SK-N-SH (cell line): ENCODE measurements at regions of chr5 and their contacts with region 1.

Region 1: DNA sequence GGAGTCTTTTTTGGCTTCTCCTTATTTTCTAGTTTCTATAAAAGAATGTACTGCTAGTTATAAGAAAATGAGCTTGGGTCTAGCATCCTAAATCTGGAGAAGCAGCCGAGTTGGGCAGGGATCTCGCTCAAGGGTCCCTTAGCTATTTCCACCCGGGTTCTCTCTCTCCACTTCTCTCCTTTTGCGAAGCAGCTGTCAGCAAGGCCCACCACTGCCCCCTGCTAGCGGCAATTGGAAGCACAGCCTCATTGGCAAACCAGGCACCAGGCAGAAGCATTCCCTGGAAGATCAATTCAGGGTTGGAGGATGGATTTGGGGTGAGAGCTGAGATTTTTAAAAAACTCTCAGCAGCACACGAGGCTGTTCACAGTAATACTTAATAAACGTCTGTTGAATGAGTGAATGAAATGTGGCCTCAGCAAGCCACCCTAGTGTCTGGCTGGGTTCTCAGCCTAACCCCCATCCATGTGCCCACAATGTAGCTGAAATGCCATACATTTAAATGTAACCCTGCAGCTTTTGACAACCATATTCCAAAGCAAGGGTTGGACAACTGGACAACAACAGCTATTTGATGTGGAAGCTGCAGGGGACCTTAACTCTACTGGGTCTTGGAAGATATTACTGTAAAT is 34.6 kb upstream of the TNIP1 start:
- DNase-seq: peak; percentile 83
- H3K4me3 ChIP-seq: no peak overlapping the region
- H3K27ac ChIP-seq: no peak overlapping the region
- H3K4me1 ChIP-seq: no peaks in the 10 kb centered on the region
- H3K27me3 ChIP-seq: no peaks in the 10 kb centered on the region
- CTCF ChIP-seq: peak; percentile 97
- EP300 ChIP-seq: no peak
- RAD21 ChIP-seq: peak; percentile 92

Region 2: DNA sequence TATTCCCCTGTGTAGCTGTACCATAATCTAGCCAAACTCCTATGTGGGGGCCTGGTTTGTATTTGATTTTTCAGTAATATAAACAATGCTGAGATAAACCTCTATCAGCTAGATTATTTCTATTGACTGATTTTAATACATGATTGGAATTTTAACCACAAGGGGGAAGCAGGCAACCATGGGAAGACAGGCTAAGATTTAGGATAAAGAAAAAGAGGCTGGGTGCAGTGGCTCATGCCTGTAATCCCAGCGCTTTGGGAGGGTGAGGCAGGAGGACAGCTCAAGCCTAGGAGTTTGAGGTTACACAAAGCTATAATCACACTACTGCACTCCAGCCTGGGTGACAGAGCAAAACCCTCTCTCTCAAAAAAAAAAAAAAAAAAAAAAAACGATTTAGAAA is 113.1 kb before region 1 on chr5:
- CTCF ChIA-PET with region 1: interaction called, 57 read pairs
- POLR2A ChIA-PET with region 1: no interaction called
- DNase-seq: peak; percentile 41
- H3K4me3 ChIP-seq: no peak overlapping the region
- H3K27ac ChIP-seq: no peak overlapping the region
- H3K4me1 ChIP-seq: no peaks in the 10 kb centered on the region; a peak in 1 of 4 replicates
- H3K27me3 ChIP-seq: no peaks in the 10 kb centered on the region
- CTCF ChIP-seq: peak; percentile 60
- EP300 ChIP-seq: no peak
- RAD21 ChIP-seq: peak; percentile 76

Region 3: DNA sequence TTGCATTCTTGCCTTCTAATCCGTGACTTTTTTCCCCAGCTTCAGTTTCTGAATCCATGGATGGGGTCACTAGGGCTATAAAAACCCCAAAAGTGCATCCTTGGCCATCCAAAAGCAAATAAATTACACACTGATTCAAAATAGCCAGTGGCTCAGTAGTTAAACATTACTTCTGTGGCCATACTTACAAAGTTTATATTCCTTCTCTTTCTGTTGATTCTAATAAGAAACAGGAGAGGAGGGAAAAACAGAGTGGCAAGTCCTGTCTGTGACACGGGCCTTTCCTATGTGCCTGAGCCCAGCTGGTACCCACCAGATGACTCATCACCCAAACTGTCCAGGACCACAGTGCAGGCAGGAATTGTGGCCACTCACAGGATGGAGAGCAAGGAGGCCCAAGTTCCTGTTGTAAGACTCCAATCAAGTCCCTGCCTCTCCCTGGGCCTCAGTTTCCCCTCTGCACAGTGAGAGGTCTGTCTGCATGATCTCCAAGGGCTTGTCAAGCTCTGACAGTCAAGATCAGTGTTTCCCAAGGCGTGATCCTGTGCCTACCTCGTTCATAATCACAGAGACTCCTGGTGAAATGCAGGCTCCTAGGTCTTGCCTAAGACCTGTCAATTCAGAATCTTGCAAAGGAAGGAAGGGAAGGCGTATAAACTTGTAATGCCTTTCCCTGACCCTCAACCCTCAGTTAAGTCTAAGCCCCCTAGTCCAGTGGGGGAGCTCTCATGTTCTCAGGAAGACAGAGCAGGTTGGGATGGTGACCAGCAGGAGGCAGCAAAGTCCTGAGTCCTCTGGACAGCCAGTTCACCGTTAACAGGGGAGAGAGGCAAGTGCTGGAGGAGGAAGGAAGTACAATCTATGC is 64.1 kb before region 1 on chr5:
- CTCF ChIA-PET with region 1: interaction called, 441 read pairs
- POLR2A ChIA-PET with region 1: interaction called, 6 read pairs
- DNase-seq: peak; percentile 86
- H3K4me3 ChIP-seq: no peak overlapping the region; a peak in 1 of 4 replicates
- H3K27ac ChIP-seq: no peak overlapping the region
- H3K4me1 ChIP-seq: no peaks in the 10 kb centered on the region
- H3K27me3 ChIP-seq: no peaks in the 10 kb centered on the region
- CTCF ChIP-seq: peak; percentile 92
- EP300 ChIP-seq: no peak
- RAD21 ChIP-seq: peak; percentile 93

Region 4: DNA sequence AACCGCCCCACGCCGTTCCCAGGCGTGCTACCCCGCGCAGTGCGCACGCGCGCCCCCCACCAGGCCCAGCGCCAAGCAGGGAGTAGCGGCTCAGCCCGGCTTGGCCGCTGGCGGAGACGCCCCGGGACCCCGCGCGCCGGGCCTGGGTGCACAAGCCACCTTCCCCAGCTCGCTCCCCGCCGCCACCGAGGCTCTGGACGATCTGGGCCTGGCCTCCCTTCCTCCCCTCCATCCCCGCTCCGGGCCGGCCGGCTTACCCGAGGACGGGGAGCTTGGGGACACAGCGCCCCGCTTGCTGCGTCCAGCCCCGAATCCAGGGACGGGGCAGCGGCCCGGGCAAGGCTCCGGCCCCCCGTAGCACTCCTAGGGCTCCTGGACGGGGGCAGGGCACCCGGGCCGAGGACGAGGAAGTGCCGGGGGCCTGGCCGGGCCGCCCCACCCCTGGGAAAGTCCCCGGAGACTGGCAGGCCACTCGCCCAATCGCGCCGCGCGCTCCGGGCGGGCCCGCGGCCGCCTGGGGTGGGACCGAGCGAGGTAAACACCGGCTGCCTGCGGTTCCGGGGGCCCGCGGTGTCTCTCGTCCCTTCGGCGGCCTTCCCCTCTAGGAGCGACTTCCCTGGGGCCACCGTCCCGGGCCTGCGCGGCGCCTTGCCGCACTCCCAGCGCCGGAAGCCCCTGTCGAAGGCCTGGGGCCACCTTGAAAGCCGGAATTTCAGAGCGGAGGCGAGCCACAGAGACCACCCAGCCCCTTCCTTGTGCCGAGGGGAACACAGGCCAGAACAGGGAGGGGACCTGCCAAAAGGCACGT is 34.6 kb before region 1 on chr5 and contains the start of gene TNIP1:
- CTCF ChIA-PET with region 1: interaction called, 23 read pairs
- POLR2A ChIA-PET with region 1: interaction called, 3 read pairs
- DNase-seq: peak; percentile 98
- H3K4me3 ChIP-seq: peak within 1 kb of the TSS; percentile 80 to 85
- H3K27ac ChIP-seq: peak within 1 kb of the TSS; percentile 89 to 97
- H3K4me1 ChIP-seq: peaks cover 4 to 19% of the 10 kb centered on the region in 2 experiments; a peak in 3 of 4 replicates
- H3K27me3 ChIP-seq: no peaks in the 10 kb centered on the region
- CTCF ChIP-seq: no peak
- EP300 ChIP-seq: no peak
- RAD21 ChIP-seq: no peak
- polyA plus RNA-seq, gene TNIP1: 39.4 and 46.2 TPM in 2 replicates

Region 5: DNA sequence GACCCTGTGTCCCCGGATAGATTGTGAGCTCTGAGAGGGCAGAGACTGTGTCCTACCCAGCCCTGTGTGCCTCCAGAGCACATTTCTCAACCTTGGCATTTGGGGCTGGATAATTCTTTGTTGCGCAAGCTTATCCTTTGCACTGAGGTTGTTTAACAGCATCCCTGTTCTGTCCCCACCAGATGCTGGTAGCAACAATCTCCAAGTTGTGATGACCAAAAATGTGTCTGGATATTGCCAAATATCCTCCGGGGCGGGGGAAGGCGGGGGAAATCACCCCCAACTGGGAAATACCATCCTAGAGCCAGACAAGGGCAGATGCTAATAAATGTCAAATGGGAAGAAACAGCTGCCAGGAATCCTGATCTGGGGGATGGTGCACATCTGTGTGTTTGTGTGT is 10.6 kb before region 1 on chr5:
- CTCF ChIA-PET with region 1: interaction called, 30 read pairs
- POLR2A ChIA-PET with region 1: no interaction called
- DNase-seq: no peak
- H3K4me3 ChIP-seq: no peak overlapping the region
- H3K27ac ChIP-seq: no peak overlapping the region
- H3K4me1 ChIP-seq: peaks cover 0 to 3% of the 10 kb centered on the region in 2 experiments; a peak in 1 of 4 replicates
- H3K27me3 ChIP-seq: no peaks in the 10 kb centered on the region
- CTCF ChIP-seq: no peak
- EP300 ChIP-seq: no peak
- RAD21 ChIP-seq: no peak

Region 6: DNA sequence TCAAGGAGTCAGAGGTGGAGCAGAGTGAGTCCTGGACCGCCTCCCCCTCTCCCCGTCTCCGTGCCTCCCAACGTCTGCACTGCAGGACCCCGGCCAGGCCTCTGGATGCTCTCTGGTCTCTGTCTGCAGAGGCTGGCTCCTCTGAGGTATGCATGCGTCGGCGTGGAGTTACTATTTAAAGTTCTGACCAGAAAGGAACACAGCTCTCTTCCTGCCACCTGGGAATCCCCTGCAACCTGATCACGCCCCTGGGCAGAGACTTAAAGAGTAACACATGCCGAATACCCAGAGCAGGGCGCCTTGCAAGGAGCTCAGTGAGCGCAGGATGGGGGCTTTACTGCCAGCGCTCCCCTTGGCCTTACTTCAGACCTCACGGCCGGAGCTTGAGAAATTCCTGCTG is 26.1 kb after region 1 on chr5:
- CTCF ChIA-PET with region 1: interaction called, 29 read pairs
- POLR2A ChIA-PET with region 1: no interaction called
- DNase-seq: no peak
- H3K4me3 ChIP-seq: no peak overlapping the region
- H3K27ac ChIP-seq: no peak overlapping the region; a peak in 1 of 4 replicates
- H3K4me1 ChIP-seq: no peaks in the 10 kb centered on the region
- H3K27me3 ChIP-seq: no peaks in the 10 kb centered on the region
- CTCF ChIP-seq: no peak
- EP300 ChIP-seq: no peak
- RAD21 ChIP-seq: no peak

Region 7: GRCh38 chr5:151174612-151175101 is 59.3 kb after region 1 on chr5:
- CTCF ChIA-PET with region 1: interaction called, 540 read pairs
- POLR2A ChIA-PET with region 1: no interaction called
- DNase-seq: no peak
- H3K4me3 ChIP-seq: no peak overlapping the region
- H3K27ac ChIP-seq: no peak overlapping the region
- H3K4me1 ChIP-seq: no peaks in the 10 kb centered on the region
- H3K27me3 ChIP-seq: no peaks in the 10 kb centered on the region; the same call in 1 of the 2 replicates
- CTCF ChIP-seq: no peak
- EP300 ChIP-seq: no peak
- RAD21 ChIP-seq: no peak

Region 8: GRCh38 chr5:151483176-151483575 is 367.8 kb after region 1 on chr5:
- CTCF ChIA-PET with region 1: no interaction called
- POLR2A ChIA-PET with region 1: no interaction called
- DNase-seq: no peak
- H3K4me3 ChIP-seq: no peak overlapping the region
- H3K27ac ChIP-seq: peak overlapping the region in 1 of 2 experiments; percentile 20; a peak in 1 of 4 replicates
- H3K4me1 ChIP-seq: peaks cover 13% of the 10 kb centered on the region in 2 experiments; a peak in 3 of 4 replicates
- H3K27me3 ChIP-seq: no peaks in the 10 kb centered on the region
- CTCF ChIP-seq: no peak
- EP300 ChIP-seq: no peak
- RAD21 ChIP-seq: no peak